Activated B cell treated with CpG ODN at 0.5 μM for 24 hours (primary cell): ENCODE measurements at regions of chr17 and their contacts with region 1.

Region 1: GRCh38 chr17:42248351-42249179 is 27.6 kb downstream of the STAT5B start:
- DNase-seq: peak; percentile 42
- ATAC-seq: peak; percentile 99
- H3K4me3 Mint-ChIP-seq: peak overlapping the region; percentile 86
- H3K27ac Mint-ChIP-seq: peak overlapping the region; percentile 96
- H3K4me1 Mint-ChIP-seq: peaks cover 52% of the 10 kb centered on the region
- H3K27me3 Mint-ChIP-seq: no peaks in the 10 kb centered on the region
- CTCF ChIP-seq: no peak

Region 2: DNA sequence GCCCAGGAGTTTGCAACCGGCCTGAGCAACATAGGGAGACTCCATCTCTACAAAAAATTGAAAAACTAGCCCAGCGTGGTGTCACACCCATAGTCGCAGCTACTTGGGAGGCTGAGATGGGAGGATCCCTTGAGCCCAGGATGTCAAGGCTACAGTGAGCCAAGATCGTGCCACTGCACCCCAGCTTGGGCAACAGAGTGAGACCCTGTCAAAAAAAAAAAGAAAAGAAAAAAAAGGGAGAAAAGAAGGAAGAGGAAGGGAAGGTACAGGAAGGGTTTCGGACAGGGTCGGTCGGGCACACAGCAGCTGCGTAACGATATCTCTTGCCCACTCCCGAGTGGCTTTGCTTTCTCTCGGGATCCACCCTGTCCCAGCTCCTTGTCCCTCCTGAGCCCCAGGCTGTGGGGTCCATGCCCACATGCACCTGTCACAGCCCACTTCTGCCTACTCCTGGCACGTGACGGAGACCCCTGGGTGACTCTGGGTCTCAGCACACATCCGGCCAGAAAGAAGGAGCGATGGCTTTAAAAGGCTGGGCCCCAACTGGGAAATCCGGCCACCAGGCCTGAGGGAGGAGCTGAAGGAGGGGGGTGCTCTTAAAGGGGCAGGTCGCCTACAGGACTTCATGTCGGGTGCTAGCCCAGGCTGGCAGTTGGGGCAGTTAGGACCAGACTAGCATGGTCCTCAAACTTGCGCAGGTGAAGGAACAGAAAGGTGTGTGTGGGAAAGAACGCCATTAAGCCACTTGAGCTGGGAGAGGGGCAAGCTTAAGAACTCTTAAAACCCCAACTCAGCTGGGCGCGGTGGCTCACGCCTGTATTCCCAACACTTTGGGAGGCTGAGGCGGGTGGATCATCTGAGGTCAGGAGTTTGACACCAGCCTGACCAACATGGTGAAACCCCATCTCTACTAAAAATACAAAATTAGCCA is 54.3 kb before region 1 on chr17 and contains the start of gene GHDC:
- CTCF ChIA-PET with region 1: interaction called, 3 read pairs
- POLR2A ChIA-PET with region 1: interaction called, 16 read pairs
- intact Hi-C with region 1: no loop called
- DNase-seq: peak; percentile 74
- ATAC-seq: peak; percentile 90
- H3K4me3 Mint-ChIP-seq: peak within 1 kb of the TSS; percentile 98
- H3K27ac Mint-ChIP-seq: peak within 1 kb of the TSS; percentile 96
- H3K4me1 Mint-ChIP-seq: peaks cover 33% of the 10 kb centered on the region
- H3K27me3 Mint-ChIP-seq: no peaks in the 10 kb centered on the region
- CTCF ChIP-seq: no peak
- total RNA-seq, gene GHDC: 26.5 and 29.1 TPM in 2 replicates

Region 3: GRCh38 chr17:42221937-42222745 is 26.4 kb before region 1 on chr17:
- CTCF ChIA-PET with region 1: interaction called, 3 read pairs
- POLR2A ChIA-PET with region 1: interaction called, 11 read pairs
- intact Hi-C with region 1: no loop called
- DNase-seq: no peak
- ATAC-seq: peak; percentile 81
- H3K4me3 Mint-ChIP-seq: no peak overlapping the region
- H3K27ac Mint-ChIP-seq: no peak overlapping the region
- H3K4me1 Mint-ChIP-seq: no peaks in the 10 kb centered on the region
- H3K27me3 Mint-ChIP-seq: no peaks in the 10 kb centered on the region
- CTCF ChIP-seq: no peak

Region 4: DNA sequence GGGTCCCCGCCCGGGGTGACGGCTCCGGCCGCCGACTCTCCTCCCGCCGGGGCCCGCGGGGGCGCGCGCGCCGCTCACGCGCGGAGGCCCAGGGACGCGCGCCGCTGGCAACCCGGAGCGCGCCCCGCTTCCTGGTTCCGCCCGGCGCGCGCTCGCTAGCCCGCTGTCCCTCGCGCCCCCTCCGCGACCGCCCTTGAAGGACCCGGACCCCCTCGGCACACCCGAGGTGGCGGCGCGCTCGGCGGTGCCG is 27.7 kb after region 1 on chr17 and contains the start of gene STAT5B:
- CTCF ChIA-PET with region 1: no interaction called
- POLR2A ChIA-PET with region 1: interaction called, 40 read pairs
- intact Hi-C with region 1: loop called (anchors 1 kb)
- DNase-seq: peak; percentile 79
- ATAC-seq: peak; percentile 81
- H3K4me3 Mint-ChIP-seq: peak within 1 kb of the TSS; percentile 92
- H3K27ac Mint-ChIP-seq: peak within 1 kb of the TSS; percentile 81
- H3K4me1 Mint-ChIP-seq: peaks cover 52% of the 10 kb centered on the region
- H3K27me3 Mint-ChIP-seq: no peaks in the 10 kb centered on the region
- CTCF ChIP-seq: no peak
- total RNA-seq, gene STAT5B: 80.3 and 82.6 TPM in 2 replicates